ENCODE measurements at regions of chr17 and their contacts with region 1.

Region 1: DNA sequence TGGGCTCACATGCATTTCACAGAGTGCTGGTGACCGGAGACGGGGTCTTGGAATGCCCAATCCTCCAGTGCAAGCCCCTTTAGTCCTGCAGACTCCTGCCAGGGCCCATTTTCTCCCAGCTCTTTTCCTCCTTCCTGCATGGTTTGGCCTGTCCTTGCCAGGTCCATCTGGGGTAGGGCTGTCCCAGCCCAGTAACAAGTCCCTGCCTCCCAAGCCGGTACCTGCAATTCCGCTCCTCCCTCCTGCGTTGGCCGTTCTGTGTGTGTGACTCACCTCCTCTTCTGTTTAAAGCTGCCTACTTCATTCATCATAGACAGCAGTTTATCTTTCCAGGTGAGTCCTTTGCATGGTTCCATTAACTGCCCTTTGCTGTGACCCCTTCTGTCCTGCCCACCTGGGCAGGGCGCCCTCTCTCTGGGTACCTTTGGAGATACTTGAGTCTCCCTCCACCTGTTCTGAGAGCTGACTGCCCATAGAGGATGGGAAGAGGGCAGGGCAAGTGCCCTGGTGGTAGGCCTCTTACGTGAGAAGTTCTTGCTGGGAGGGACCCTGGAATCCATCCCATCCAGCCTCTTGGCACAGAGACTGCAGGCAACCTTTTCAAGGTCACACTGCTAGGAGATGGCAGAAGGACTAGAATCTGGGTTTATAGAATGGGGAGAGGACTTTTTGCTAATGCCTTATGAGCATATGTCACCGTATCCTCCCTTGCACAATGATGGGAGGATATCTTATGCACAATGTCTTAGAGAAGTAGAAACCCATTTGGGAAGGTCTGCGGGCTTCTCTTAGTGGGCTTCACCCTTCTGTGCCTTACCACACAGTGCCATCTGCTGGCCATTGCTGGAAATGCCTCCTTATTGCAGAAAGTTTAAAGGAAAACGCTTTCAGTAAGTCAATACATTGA is 29.7 kb upstream of the LGALS9 start:
- DNase-seq: peak; percentile 86
- ATAC-seq: peak; percentile 68
- H3K4me3 ChIP-seq: no peak overlapping the region
- H3K4me3 Mint-ChIP-seq: no peak overlapping the region
- H3K27ac ChIP-seq: no peak overlapping the region
- H3K27ac Mint-ChIP-seq: no peak overlapping the region
- H3K4me1 ChIP-seq: peaks cover 0 to 4% of the 10 kb centered on the region in 2 donors
- H3K4me1 Mint-ChIP-seq: peaks cover 2% of the 10 kb centered on the region
- H3K27me3 ChIP-seq: no peaks in the 10 kb centered on the region
- H3K27me3 Mint-ChIP-seq: no peaks in the 10 kb centered on the region
- CTCF ChIP-seq: peak; percentile 95

Region 2: DNA sequence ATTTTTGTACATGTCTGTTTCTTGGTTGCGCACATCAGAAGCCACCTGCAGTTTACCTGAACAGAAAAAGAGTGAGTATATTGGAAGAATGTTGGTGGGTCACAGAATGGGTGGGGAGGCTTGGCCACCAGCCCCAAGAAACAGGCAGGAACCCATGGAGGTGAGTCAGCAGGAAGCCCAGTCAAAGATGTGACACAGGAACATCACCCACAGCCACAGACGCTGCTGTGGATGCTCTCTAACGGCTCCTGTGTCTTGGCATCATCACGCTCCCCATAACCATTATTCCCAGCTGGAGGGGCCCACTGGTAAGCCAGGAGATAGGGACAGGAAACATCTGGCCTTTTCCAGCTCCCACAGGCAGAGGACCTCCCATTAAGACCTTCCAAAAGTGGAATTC is 401.4 kb before region 1 on chr17:
- CTCF ChIA-PET with region 1: interaction called, 39 read pairs
- POLR2A ChIA-PET with region 1: no interaction called
- intact Hi-C with region 1: no loop called
- DNase-seq: no peak
- ATAC-seq: no peak
- H3K4me3 ChIP-seq: no peak overlapping the region
- H3K4me3 Mint-ChIP-seq: no peak overlapping the region
- H3K27ac ChIP-seq: no peak overlapping the region
- H3K27ac Mint-ChIP-seq: no peak overlapping the region
- H3K4me1 ChIP-seq: no peaks in the 10 kb centered on the region
- H3K4me1 Mint-ChIP-seq: peaks cover 2% of the 10 kb centered on the region
- H3K27me3 ChIP-seq: no peaks in the 10 kb centered on the region
- H3K27me3 Mint-ChIP-seq: no peaks in the 10 kb centered on the region
- CTCF ChIP-seq: no peak

Region 3: GRCh38 chr17:27332485-27333409 is 268.6 kb before region 1 on chr17:
- CTCF ChIA-PET with region 1: interaction called, 28 read pairs
- POLR2A ChIA-PET with region 1: no interaction called
- intact Hi-C with region 1: loop called (anchors 1 kb)
- DNase-seq: peak; percentile 92
- ATAC-seq: peak; percentile 83
- H3K4me3 ChIP-seq: peak overlapping the region; percentile 23 to 63 (median 55)
- H3K4me3 Mint-ChIP-seq: peak overlapping the region; percentile 85
- H3K27ac ChIP-seq: peak overlapping the region; percentile 38 to 59
- H3K27ac Mint-ChIP-seq: peak overlapping the region; percentile 92
- H3K4me1 ChIP-seq: peaks cover 11 to 13% of the 10 kb centered on the region in 2 donors
- H3K4me1 Mint-ChIP-seq: peaks cover 40% of the 10 kb centered on the region
- H3K27me3 ChIP-seq: no peaks in the 10 kb centered on the region
- H3K27me3 Mint-ChIP-seq: no peaks in the 10 kb centered on the region
- CTCF ChIP-seq: peak; percentile 80

Region 4: GRCh38 chr17:27413792-27414191 is 187.5 kb before region 1 on chr17:
- CTCF ChIA-PET with region 1: interaction called, 30 read pairs
- POLR2A ChIA-PET with region 1: interaction called, 5 read pairs
- intact Hi-C with region 1: no loop called
- DNase-seq: peak; percentile 45
- ATAC-seq: no peak
- H3K4me3 ChIP-seq: no peak overlapping the region
- H3K4me3 Mint-ChIP-seq: no peak overlapping the region
- H3K27ac ChIP-seq: no peak overlapping the region
- H3K27ac Mint-ChIP-seq: no peak overlapping the region
- H3K4me1 ChIP-seq: peaks cover 13 to 15% of the 10 kb centered on the region in 2 donors
- H3K4me1 Mint-ChIP-seq: peaks cover 4% of the 10 kb centered on the region
- H3K27me3 ChIP-seq: peaks cover 0 to 1% (median 0%) of the 10 kb centered on the region in 4 experiments
- H3K27me3 Mint-ChIP-seq: peaks cover 3% of the 10 kb centered on the region
- CTCF ChIP-seq: no peak

Region 5: DNA sequence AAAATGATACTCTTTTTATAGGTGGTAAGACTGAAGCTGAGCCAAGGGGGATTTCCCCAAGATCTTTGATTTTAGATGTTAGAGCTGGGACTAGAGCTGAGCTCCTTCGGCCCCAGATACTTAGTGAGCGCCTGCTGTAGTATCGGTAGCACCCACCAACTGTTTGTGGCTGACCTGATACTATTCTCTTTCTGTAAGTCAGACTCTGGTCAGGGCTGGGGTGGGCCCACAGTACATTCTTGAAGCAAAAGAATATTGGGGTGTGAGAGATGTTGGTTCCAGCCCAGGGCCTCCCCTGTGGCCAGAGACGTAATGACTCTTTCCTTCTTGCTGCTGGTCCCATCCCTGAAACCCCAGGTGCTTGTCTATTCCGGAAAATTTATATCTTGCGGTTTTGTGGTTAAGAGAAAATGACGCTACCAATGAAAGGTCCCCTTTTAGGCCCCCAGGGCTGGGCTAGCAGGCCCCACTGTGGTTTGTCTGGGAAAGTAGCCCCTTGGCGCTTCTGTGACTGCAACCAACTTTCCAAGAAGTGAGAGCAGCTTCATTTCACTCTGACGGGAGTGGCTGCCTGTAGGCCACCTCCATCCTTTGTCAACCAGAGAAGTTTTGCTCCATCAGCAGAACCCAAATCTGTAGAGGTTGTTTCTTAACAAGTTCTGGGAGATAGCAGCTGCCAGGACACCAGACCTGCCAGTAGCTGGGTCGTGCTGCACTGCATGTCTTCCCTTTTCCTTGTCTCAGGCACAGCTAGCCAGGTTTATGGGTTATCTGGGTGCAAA is 56.8 kb before region 1 on chr17:
- CTCF ChIA-PET with region 1: interaction called, 10 read pairs
- POLR2A ChIA-PET with region 1: no interaction called
- intact Hi-C with region 1: no loop called
- DNase-seq: peak; percentile 70
- ATAC-seq: peak; percentile 84
- H3K4me3 ChIP-seq: no peak overlapping the region
- H3K4me3 Mint-ChIP-seq: peak overlapping the region; percentile 75
- H3K27ac ChIP-seq: peak overlapping the region; percentile 6 to 28
- H3K27ac Mint-ChIP-seq: peak overlapping the region; percentile 87
- H3K4me1 ChIP-seq: peaks cover 58 to 65% of the 10 kb centered on the region in 2 donors
- H3K4me1 Mint-ChIP-seq: peaks cover 72% of the 10 kb centered on the region
- H3K27me3 ChIP-seq: no peaks in the 10 kb centered on the region
- H3K27me3 Mint-ChIP-seq: no peaks in the 10 kb centered on the region
- CTCF ChIP-seq: no peak

Region 6: GRCh38 chr17:27616414-27616813 is 15.1 kb after region 1 on chr17:
- CTCF ChIA-PET with region 1: interaction called, 36 read pairs
- POLR2A ChIA-PET with region 1: no interaction called
- intact Hi-C with region 1: no loop called
- DNase-seq: no peak
- ATAC-seq: no peak
- H3K4me3 ChIP-seq: no peak overlapping the region
- H3K4me3 Mint-ChIP-seq: no peak overlapping the region
- H3K27ac ChIP-seq: no peak overlapping the region
- H3K27ac Mint-ChIP-seq: no peak overlapping the region
- H3K4me1 ChIP-seq: peaks cover 5 to 12% of the 10 kb centered on the region in 2 donors
- H3K4me1 Mint-ChIP-seq: peaks cover 5% of the 10 kb centered on the region
- H3K27me3 ChIP-seq: no peaks in the 10 kb centered on the region
- H3K27me3 Mint-ChIP-seq: no peaks in the 10 kb centered on the region
- CTCF ChIP-seq: no peak

Measured in B cell (primary cell).